CD4-positive, alpha-beta memory T cell (primary cell): ENCODE measurements at regions of chr6 and their contacts with region 1.

Region 1: DNA sequence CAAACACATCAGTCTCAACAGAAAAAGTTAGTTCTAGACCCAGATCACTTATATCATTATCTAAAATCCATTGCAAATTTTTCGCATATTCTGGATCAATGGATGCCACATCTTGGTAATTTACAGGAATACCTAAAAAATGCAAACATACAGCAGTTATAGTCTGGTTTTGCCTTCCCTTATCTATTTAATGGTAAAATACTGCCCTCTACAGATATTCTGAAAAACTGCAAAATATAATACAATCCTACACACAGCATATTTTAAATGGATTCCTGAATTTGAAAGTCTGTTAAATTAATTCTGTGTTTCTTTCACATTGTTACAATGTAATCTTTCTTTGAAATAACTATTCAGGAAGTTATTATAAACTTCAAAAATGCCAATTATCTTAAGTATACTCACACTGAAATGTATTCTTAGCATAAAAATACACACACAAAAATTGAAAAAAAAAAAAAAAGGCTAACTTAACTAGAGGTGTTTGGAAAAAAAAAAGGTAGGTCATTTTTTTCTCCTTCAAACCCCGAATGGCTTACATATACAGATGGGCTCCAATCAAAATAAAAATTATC is 88.4 kb downstream of the HACE1 start:
- DNase-seq: peak in 4 of 5 donors; percentile 38 to 52 (median 41)
- H3K4me3 ChIP-seq: no peak overlapping the region
- H3K4me3 Mint-ChIP-seq: no peak overlapping the region
- H3K27ac ChIP-seq: no peak overlapping the region
- H3K27ac Mint-ChIP-seq: peak overlapping the region in 1 of 7 donors; percentile 65
- H3K4me1 ChIP-seq: no peaks in the 10 kb centered on the region
- H3K4me1 Mint-ChIP-seq: peaks cover 8 to 14% (median 10%) of the 10 kb centered on the region in 4 donors
- H3K27me3 ChIP-seq: no peaks in the 10 kb centered on the region
- H3K27me3 Mint-ChIP-seq: no peaks in the 10 kb centered on the region

Region 2: DNA sequence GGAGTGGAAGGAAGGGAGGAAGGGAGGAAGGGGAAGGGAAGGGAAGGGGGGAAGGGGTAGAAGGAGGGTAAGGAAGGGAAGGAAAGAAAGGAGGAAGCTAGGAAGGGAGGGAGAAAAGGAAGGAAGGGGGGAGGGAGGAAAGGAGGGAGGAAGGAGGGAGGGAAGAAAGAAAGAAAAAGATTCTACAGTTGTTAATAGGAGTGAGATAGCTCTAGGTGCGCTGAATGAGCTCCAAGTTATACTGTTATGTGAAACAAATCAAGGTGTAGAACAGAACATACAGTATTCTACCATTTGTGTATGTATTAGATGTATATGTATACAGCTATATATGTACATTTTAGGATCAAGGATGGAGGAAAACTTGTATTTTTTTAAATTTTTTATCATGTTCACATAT is 79.3 kb before region 1 on chr6:
- CTCF ChIA-PET with region 1: interaction called, 10 read pairs
- POLR2A ChIA-PET with region 1: no interaction called
- intact Hi-C with region 1: no loop called
- DNase-seq: no peak
- H3K4me3 ChIP-seq: no peak overlapping the region
- H3K4me3 Mint-ChIP-seq: no peak overlapping the region
- H3K27ac ChIP-seq: no peak overlapping the region
- H3K27ac Mint-ChIP-seq: no peak overlapping the region
- H3K4me1 ChIP-seq: peaks cover 10% of the 10 kb centered on the region
- H3K4me1 Mint-ChIP-seq: peaks cover 15 to 23% (median 19%) of the 10 kb centered on the region in 4 donors
- H3K27me3 ChIP-seq: no peaks in the 10 kb centered on the region
- H3K27me3 Mint-ChIP-seq: no peaks in the 10 kb centered on the region